ENCODE measurements at regions of chr9 and their contacts with region 1.

Region 1: GRCh38 chr9:114856215-114856941 is 50.5 kb upstream of the TNFSF15 start:
- DNase-seq: peak; percentile 72
- H3K4me3 ChIP-seq: no peak overlapping the region
- H3K27ac ChIP-seq: peak overlapping the region in 3 of 4 donors; percentile 34 to 63 (median 47)
- H3K4me1 ChIP-seq: peaks cover 0 to 29% (median 15%) of the 10 kb centered on the region in 4 donors
- H3K27me3 ChIP-seq: no peaks in the 10 kb centered on the region
- CTCF ChIP-seq: no peak
- EP300 ChIP-seq: peak in 1 of 4 donors; percentile 19
- POLR2A ChIP-seq: no peak

Region 2: GRCh38 chr9:114805670-114806525 is 50.5 kb before region 1 on chr9 and contains the start of gene TNFSF15:
- intact Hi-C with region 1: loop called (anchors 5 kb)
- DNase-seq: peak; percentile 63
- H3K4me3 ChIP-seq: peak within 1 kb of the TSS in 3 of 4 donors; percentile 13 to 33 (median 28)
- H3K27ac ChIP-seq: peak within 1 kb of the TSS in 3 of 4 donors; percentile 25 to 42 (median 25)
- H3K4me1 ChIP-seq: peaks cover 0 to 16% (median 12%) of the 10 kb centered on the region in 4 donors
- H3K27me3 ChIP-seq: no peaks in the 10 kb centered on the region
- CTCF ChIP-seq: no peak
- EP300 ChIP-seq: no peak
- POLR2A ChIP-seq: no peak
- total RNA-seq, gene TNFSF15: 2.3 to 13.2 (median 10.1) TPM

Region 3: DNA sequence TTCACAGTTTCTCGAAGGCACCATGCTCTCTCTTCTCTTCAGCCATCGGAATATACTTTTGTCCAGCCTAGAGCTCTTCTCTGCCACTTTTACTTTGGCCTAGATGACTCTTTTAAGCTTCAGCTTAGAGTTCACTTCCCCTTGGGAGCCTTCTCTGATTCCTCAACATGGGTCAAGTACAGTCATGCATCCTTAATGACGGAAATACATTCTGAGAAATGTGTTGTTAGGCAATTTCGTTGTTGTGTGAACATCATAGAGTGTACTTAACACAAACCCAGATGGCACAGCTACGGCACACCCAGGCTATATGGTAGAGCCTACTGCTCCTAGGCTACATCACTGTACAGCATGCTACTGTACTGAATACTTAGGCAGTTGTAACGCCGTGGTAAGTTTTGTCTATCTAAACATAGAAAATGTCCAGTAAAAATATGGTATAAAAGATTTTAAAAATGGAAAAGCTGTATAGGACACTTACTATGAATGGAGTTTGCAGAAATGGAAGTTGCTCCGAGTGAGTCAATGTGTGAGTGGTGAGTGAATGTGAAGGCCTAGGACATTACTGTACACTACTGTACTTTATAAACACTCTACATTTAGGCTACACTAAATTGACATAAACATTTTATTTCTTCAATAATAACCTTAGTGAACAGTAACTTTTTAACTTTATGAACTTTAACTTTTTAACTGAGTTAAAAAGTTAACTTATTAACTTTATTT is 35.4 kb before region 1 on chr9:
- intact Hi-C with region 1: no loop called
- DNase-seq: no peak
- H3K4me3 ChIP-seq: no peak overlapping the region
- H3K27ac ChIP-seq: no peak overlapping the region
- H3K4me1 ChIP-seq: no peaks in the 10 kb centered on the region
- H3K27me3 ChIP-seq: no peaks in the 10 kb centered on the region
- CTCF ChIP-seq: no peak
- EP300 ChIP-seq: no peak
- POLR2A ChIP-seq: no peak

Region 4: GRCh38 chr9:114914139-114914538 is 57.8 kb after region 1 on chr9:
- intact Hi-C with region 1: no loop called
- DNase-seq: no peak
- H3K4me3 ChIP-seq: no peak overlapping the region
- H3K27ac ChIP-seq: no peak overlapping the region
- H3K4me1 ChIP-seq: peaks cover 0 to 10% (median 0%) of the 10 kb centered on the region in 4 donors
- H3K27me3 ChIP-seq: no peaks in the 10 kb centered on the region
- CTCF ChIP-seq: no peak
- EP300 ChIP-seq: no peak
- POLR2A ChIP-seq: no peak

Region 5: GRCh38 chr9:114958021-114958843 is 101.9 kb after region 1 on chr9:
- intact Hi-C with region 1: no loop called
- DNase-seq: peak; percentile 68
- H3K4me3 ChIP-seq: no peak overlapping the region
- H3K27ac ChIP-seq: peak overlapping the region in 1 of 4 donors; percentile 56
- H3K4me1 ChIP-seq: peaks cover 0 to 9% (median 0%) of the 10 kb centered on the region in 4 donors
- H3K27me3 ChIP-seq: no peaks in the 10 kb centered on the region
- CTCF ChIP-seq: no peak
- EP300 ChIP-seq: no peak
- POLR2A ChIP-seq: no peak